ENCODE measurements at regions of chr9 and their contacts with region 1.

Region 1: DNA sequence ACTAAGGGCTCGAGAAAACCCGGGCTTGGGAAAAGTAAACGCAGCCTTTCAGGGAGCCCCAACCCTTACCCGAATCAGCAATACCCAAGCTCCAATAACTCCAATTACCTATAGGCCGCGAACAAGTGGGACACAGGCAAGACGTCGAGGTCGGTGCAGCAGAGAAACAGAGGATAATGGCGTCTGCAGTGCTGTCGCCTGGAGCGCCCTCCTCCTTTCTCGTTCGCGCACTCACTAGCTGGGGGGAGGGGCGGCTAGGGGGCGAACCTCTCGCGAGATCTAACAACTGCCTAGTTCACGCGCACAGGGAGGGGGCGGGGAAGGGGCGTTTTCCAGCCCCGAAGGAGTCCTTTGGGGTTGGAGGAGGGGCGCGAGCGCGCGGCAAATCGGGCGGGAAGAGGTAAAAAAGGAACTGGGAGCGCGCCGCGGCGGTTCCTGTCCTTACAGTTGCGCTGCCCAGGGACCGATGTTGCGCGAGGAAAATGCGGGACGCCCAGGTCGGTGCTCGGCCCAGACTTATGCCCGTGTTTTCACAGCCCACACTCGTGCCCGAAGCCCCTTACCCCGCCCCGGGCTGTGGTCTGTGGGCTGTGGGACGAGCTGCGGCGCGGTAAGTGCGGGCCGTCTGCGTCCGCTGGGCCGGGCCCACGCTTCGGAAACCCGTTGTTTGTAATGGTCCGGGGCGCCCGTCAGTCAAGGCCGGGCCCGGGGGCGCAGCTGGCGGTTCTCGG is at the start of gene RMI1:
- DNase-seq: peak; percentile 99
- H3K4me3 Mint-ChIP-seq: peak within 1 kb of the TSS; percentile 94
- H3K27ac Mint-ChIP-seq: peak within 1 kb of the TSS; percentile 98
- H3K4me1 Mint-ChIP-seq: peaks cover 32% of the 10 kb centered on the region
- H3K27me3 Mint-ChIP-seq: no peaks in the 10 kb centered on the region
- total RNA-seq, gene RMI1: 28.9 and 29.3 TPM in 2 replicates

Region 2: DNA sequence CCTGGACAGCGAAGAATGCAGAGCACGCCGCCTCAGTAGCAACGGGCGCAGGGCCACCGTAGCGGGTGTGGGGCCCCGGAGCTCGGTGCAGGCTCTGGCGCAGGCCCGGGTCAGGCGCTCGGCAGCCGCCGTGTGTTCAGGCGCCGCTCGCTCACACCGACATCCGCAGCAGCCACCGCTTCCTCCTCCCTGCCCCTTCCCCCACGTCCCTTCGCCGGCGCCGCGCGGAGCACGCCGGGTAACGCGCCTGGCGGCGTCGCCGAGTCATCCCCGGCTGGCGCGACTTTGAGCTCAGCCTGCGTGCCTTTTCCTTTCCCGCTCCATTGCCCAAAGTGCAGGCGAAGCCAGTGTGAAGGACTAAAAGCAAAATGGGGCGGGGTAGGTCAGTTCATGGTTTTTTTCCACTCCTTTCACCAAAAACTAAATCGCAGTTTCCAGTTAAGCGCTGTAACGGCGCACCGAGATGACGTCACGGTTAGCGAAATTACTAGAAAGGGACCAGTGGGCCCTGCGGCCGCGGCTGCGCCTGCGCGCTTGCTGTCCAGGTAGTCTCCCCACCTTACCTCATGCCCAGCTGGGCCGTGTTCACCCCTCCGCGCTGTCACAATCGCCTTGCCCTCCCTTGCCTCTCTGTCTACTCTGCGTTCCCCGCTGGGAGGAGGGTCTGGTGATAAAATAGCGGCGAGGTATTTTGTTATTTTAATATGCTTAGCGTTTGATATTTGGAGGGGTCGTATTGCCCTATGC is 272.6 kb before region 1 on chr9 and contains the start of gene UBQLN1:
- intact Hi-C with region 1: loop called (anchors 1 kb)
- DNase-seq: peak; percentile 97
- H3K4me3 Mint-ChIP-seq: peak within 1 kb of the TSS; percentile 87
- H3K27ac Mint-ChIP-seq: peak within 1 kb of the TSS; percentile 99
- H3K4me1 Mint-ChIP-seq: peaks cover 26% of the 10 kb centered on the region
- H3K27me3 Mint-ChIP-seq: no peaks in the 10 kb centered on the region
- total RNA-seq, gene UBQLN1: 131 and 144 TPM in 2 replicates

Region 3: DNA sequence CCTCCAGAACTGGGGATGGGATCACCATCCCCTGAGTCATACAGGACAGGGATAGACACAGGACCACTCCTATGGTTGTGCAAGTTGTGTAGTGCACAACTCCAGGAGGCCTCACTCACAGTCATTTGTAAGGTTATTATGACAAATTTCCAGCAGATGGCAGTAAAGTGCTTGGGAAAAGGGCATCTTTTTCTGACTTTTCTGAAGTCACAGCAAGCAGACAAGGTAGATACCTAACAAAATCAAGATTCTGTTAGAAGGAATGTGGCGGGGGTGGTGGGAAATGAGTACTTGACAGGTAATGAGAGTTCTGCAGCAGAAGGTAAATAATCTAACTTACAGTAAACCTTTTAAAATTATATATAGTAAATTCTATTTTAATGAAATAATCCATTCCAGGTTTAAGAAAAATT is 42.6 kb before region 1 on chr9:
- intact Hi-C with region 1: no loop called
- DNase-seq: peak; percentile 87
- H3K4me3 Mint-ChIP-seq: no peak overlapping the region
- H3K27ac Mint-ChIP-seq: no peak overlapping the region
- H3K4me1 Mint-ChIP-seq: peaks cover 10% of the 10 kb centered on the region
- H3K27me3 Mint-ChIP-seq: no peaks in the 10 kb centered on the region

Region 4: DNA sequence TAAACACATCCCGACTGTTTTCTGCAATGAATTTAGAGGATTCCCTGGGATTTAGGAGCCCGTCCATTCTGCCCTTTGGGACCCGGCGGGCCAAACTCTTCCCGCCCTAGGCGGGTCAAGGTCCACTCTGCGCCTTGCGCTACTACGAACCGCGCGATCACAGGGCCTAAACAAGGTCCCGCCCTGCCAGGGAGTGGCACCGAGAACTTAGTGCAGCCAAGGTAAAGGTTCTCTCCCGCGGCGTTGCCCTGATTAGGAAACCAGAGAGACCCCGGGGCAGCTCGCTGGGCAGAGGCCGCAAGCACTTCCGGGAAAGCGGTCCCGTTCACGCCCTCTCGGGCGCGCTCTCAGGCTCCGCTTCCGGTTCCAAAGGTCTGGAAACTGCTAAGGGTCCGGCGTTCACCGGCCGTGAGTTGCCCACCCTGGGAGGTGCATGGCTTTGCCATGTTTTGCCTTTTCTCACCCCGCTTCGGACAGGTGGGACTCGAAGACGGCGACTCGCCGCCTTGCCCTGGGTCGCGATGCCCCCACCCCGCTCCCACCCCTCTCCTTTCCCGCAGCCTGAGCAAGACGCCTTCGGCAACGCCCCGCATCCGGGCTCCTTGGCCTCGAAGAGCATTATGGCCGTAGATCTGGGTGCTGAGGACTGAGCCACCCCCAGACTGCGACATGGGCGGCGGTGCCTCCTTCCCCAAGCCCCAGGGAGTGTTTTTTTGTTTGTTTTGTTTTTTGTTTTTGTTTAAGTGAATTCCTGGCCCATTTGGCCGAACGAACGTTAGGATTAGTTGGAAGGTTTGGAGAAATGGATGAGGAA is 23.9 kb before region 1 on chr9:
- intact Hi-C with region 1: loop called (anchors 1 kb)
- DNase-seq: peak; percentile 92
- H3K4me3 Mint-ChIP-seq: peak overlapping the region; percentile 99
- H3K27ac Mint-ChIP-seq: peak overlapping the region; percentile 97
- H3K4me1 Mint-ChIP-seq: peaks cover 12% of the 10 kb centered on the region
- H3K27me3 Mint-ChIP-seq: no peaks in the 10 kb centered on the region

Region 5: DNA sequence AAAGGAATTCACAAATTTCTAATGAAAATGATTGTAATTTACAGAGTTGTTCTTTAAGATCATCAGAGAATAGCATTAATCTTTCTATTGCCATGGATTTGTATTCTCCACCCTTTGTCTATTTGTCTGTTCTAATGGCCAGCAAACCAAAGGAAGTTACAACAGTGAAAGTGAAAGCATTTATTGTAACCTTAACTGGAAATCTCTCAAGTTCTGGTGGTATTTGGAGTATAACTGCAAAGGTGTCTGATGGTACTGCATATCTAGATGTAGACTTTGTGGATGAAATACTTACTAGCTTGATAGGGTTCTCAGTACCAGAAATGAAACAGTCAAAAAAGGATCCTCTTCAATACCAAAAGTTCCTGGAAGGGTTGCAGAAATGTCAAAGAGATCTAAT is 21.8 kb after region 1 on chr9:
- intact Hi-C with region 1: no loop called
- DNase-seq: no peak
- H3K4me3 Mint-ChIP-seq: peak overlapping the region; percentile 51
- H3K27ac Mint-ChIP-seq: no peak overlapping the region
- H3K4me1 Mint-ChIP-seq: peaks cover 17% of the 10 kb centered on the region
- H3K27me3 Mint-ChIP-seq: no peaks in the 10 kb centered on the region

Region 6: GRCh38 chr9:84027201-84027600 is 46.6 kb after region 1 on chr9:
- intact Hi-C with region 1: no loop called
- DNase-seq: no peak
- H3K4me3 Mint-ChIP-seq: no peak overlapping the region
- H3K27ac Mint-ChIP-seq: no peak overlapping the region
- H3K4me1 Mint-ChIP-seq: no peaks in the 10 kb centered on the region
- H3K27me3 Mint-ChIP-seq: peaks cover 11% of the 10 kb centered on the region

Region 7: GRCh38 chr9:84139296-84140070 is 158.9 kb after region 1 on chr9:
- intact Hi-C with region 1: loop called (anchors 10 kb)
- DNase-seq: peak; percentile 43
- H3K4me3 Mint-ChIP-seq: peak overlapping the region; percentile 86
- H3K27ac Mint-ChIP-seq: no peak overlapping the region
- H3K4me1 Mint-ChIP-seq: peaks cover 7% of the 10 kb centered on the region
- H3K27me3 Mint-ChIP-seq: peaks cover 53% of the 10 kb centered on the region

Region 8: DNA sequence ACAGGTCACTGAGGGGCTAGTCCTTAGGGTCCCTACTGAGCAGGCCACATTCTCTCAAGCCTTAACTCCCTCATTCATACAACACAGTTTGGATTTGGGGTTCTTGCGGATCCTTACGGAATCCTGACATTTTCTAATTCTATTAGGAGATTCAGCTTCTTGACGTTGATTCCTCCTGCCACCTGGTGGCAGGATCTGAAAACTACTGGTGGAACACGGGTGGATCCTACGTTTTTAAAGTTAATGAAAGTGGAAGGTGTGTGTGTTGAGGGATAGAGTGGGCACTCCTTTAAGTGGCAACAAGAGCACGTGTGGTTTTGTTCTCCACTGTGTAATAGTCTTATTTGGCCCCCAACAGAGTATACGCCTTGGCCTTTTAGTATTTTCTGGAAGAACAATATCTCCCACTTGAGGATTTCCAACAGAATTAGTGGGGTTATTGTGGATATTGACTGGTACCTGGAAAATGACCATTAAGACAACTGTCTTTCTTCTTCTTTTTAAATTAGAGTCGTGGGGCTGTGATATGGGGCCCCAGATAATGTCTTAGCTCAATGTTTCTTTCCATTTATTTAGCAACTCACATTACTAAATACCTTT is 334.8 kb after region 1 on chr9:
- intact Hi-C with region 1: loop called (anchors 5 kb)
- DNase-seq: peak; percentile 89
- H3K4me3 Mint-ChIP-seq: no peak overlapping the region
- H3K27ac Mint-ChIP-seq: no peak overlapping the region
- H3K4me1 Mint-ChIP-seq: peaks cover 19% of the 10 kb centered on the region
- H3K27me3 Mint-ChIP-seq: no peaks in the 10 kb centered on the region

Region 9: DNA sequence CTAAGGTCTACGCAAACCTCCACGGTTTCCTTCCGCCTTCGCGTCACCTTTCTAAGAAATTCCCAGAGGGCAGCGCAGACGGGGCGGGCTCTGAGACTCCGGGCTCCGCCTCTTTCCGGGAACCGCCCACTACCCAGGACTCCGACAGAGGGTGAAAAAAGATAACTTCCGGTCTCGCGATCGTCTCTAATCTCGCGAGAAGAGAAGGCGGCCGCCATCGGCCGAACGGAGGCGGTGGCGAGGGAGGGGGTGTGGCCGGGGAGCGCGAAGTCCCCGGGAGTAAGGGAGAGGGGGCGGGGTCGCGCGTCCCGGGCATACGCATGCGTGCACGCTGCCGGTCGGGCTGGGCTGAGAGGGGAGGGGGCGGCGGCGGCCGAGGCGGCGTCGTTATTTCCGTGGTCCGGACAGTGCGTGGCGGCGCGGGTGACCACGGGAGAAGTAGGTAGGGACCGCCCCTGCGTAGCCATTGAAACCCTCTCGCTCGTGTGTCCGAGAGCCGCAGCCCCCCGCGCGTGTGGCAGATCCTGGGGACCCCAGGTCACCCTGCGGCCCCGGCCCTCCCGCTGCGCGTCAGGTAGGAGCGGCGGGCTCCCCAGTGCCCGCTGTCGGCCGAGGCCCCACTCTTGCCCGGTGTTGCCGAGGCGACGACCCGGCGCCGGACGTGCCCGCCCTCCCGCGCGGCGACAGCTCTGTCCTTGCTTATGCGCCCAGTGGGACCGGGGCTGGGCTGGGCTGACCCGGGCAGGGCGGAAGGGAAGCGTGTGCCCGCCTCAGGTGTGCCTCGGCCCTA is 1960.5 kb after region 1 on chr9 and contains the start of gene NAA35:
- intact Hi-C with region 1: loop called (anchors 2 kb)
- DNase-seq: peak; percentile 100
- H3K4me3 Mint-ChIP-seq: no peak within 1 kb of the TSS
- H3K27ac Mint-ChIP-seq: peak within 1 kb of the TSS; percentile 92
- H3K4me1 Mint-ChIP-seq: peaks cover 11% of the 10 kb centered on the region
- H3K27me3 Mint-ChIP-seq: no peaks in the 10 kb centered on the region
- total RNA-seq, gene NAA35: 28.0 and 29.6 TPM in 2 replicates